MCF 10A (cell line): ENCODE measurements at regions of chr4 and their contacts with region 1.

Region 1: GRCh38 chr4:86522349-86522748 is 71.8 kb upstream of the PTPN13 start:
- DNase-seq: peak; percentile 17
- H3K4me3 Mint-ChIP-seq: no peak overlapping the region
- H3K27ac Mint-ChIP-seq: no peak overlapping the region
- H3K4me1 Mint-ChIP-seq: no peaks in the 10 kb centered on the region
- H3K27me3 Mint-ChIP-seq: no peaks in the 10 kb centered on the region
- CTCF ChIP-seq: peak; percentile 43

Region 2: DNA sequence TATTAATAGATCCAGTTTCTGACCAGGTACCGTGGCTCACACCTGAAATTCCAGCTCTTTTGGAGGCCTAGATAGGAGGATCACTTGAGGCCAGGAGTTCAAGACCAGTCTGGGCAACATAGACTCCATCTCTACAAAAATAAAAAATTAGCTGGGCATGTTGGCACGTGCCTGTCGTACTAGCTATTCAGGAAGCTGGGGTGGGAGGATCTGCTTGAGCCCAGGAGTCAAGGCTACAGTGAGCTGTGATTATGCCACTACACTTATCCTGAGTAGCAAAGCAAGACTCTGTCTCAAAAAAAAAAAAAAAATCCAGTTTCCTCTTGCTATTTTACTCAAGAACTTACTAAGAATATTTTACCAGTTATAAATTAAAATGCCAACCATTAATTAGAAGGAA is 235.1 kb after region 1 on chr4:
- CTCF ChIA-PET with region 1: interaction called, 3 read pairs
- POLR2A ChIA-PET with region 1: interaction called, 3 read pairs
- intact Hi-C with region 1: loop called (anchors 10 kb)
- DNase-seq: peak; percentile 27
- H3K4me3 Mint-ChIP-seq: no peak overlapping the region
- H3K27ac Mint-ChIP-seq: no peak overlapping the region
- H3K4me1 Mint-ChIP-seq: peaks cover 5% of the 10 kb centered on the region
- H3K27me3 Mint-ChIP-seq: no peaks in the 10 kb centered on the region
- CTCF ChIP-seq: no peak